HepG2 (cell line): ENCODE measurements at regions of chr14 and their contacts with region 1.

Region 1: GRCh38 chr14:77862154-77862786 is 62.4 kb downstream of the ADCK1 start:
- DNase-seq: peak; percentile 46
- ATAC-seq: peak; percentile 91
- H3K4me3 ChIP-seq: no peak overlapping the region
- H3K27ac ChIP-seq: no peak overlapping the region
- H3K4me1 ChIP-seq: peaks cover 10% of the 10 kb centered on the region
- H3K27me3 ChIP-seq: no peaks in the 10 kb centered on the region
- CTCF ChIP-seq: peak; percentile 95
- EP300 ChIP-seq: no peak
- POLR2A ChIP-seq: no peak
- RAD21 ChIP-seq: peak; percentile 75

Region 2: DNA sequence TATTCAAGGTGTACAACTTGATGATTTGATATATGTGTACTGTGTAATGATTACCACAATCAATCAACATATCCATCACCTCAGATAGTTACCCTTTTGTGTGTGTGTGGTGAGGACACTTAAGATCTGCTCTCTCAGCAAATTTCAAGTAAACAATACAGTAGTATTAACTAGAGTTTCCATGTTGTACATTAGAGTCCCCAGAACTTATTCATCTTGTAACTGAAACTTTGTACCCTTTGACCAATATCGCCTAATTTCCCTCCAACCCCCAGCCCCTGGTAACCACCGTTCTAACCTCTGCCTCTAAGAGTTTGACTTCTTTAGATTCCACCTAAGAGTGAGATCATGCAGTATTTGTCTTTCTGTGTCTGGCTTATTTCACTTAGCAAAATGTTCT is 50.2 kb before region 1 on chr14:
- CTCF ChIA-PET with region 1: no interaction called
- POLR2A ChIA-PET with region 1: no interaction called
- in situ Hi-C with region 1: no loop called
- intact Hi-C with region 1: no loop called
- DNase-seq: no peak
- ATAC-seq: no peak
- H3K4me3 ChIP-seq: no peak overlapping the region
- H3K27ac ChIP-seq: no peak overlapping the region
- H3K4me1 ChIP-seq: peaks cover 3% of the 10 kb centered on the region; the same call in 1 of the 2 replicates
- H3K27me3 ChIP-seq: no peaks in the 10 kb centered on the region
- CTCF ChIP-seq: no peak
- EP300 ChIP-seq: no peak
- POLR2A ChIP-seq: no peak
- RAD21 ChIP-seq: no peak

Region 3: DNA sequence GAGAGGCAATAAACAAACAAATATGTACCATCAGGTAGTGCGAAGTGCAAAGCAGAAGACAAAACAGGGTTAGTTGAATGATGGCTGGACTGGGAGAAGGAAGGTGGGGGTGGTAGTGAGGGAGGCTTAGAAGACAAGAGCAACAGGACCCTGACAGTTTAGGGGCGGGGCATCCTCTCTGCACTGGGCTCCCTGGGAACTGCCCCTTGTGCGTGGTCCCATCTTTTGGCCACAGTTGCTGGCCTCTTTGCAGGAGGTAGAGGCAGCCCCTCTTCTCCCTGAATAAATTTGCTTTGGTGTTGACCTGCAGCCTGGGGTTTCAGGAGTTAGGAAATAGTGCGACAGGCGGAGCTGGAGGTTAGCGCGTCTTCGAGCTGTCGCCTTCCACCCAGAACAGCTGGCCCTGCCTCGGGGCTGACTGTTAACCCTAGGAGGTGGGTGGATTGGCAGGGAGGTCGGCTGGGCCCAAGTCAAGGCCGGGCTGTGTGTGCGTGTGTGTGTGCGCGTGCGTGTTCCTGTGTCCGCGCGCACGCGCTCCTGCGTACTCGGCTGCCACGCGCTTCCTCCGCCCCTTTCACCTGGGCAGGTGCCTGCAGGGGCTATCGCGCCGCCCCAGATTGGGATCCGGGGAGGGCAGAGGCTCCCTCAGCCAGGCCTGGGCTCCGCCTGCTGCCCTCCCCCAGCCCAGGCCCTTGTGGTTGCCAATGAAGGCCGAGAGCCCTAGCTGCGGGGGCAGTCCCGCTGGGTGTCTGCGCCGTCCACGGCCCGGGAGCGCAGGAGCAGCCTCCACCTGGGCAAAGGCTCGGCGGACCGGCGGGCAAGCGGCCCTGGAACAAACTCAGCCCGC is 118.4 kb after region 1 on chr14:
- CTCF ChIA-PET with region 1: no interaction called
- POLR2A ChIA-PET with region 1: no interaction called
- in situ Hi-C with region 1: loop called (anchors 10 kb)
- intact Hi-C with region 1: loop called (anchors 2 kb)
- DNase-seq: no peak
- ATAC-seq: peak; percentile 74
- H3K4me3 ChIP-seq: peak overlapping the region in 2 of 3 experiments; percentile 39 to 52; a peak in 3 of 6 replicates
- H3K27ac ChIP-seq: no peak overlapping the region
- H3K4me1 ChIP-seq: 0 out of 2 replicates have a peak, but pooled peaks cover 8% of the 10 kb centered on the region
- H3K27me3 ChIP-seq: peaks cover 2 to 13% of the 10 kb centered on the region in 2 experiments; a peak in 1 of 5 replicates
- CTCF ChIP-seq: no peak
- EP300 ChIP-seq: no peak
- POLR2A ChIP-seq: no peak
- RAD21 ChIP-seq: no peak

Region 4: GRCh38 chr14:77991128-77991772 is 129.0 kb after region 1 on chr14:
- CTCF ChIA-PET with region 1: interaction called, 4 read pairs
- POLR2A ChIA-PET with region 1: no interaction called
- in situ Hi-C with region 1: loop called (anchors 10 kb)
- intact Hi-C with region 1: loop called (anchors 1 kb)
- DNase-seq: peak; percentile 7
- ATAC-seq: peak; percentile 79
- H3K4me3 ChIP-seq: no peak overlapping the region
- H3K27ac ChIP-seq: no peak overlapping the region
- H3K4me1 ChIP-seq: no peaks in the 10 kb centered on the region
- H3K27me3 ChIP-seq: peaks cover 1 to 4% of the 10 kb centered on the region in 2 experiments; a peak in 2 of 5 replicates
- CTCF ChIP-seq: peak; percentile 47
- EP300 ChIP-seq: no peak
- POLR2A ChIP-seq: no peak
- RAD21 ChIP-seq: no peak

Region 5: GRCh38 chr14:78566026-78566858 is 704.0 kb after region 1 on chr14:
- CTCF ChIA-PET with region 1: interaction called, 3 read pairs
- POLR2A ChIA-PET with region 1: no interaction called
- in situ Hi-C with region 1: no loop called
- intact Hi-C with region 1: loop called (anchors 10 kb)
- DNase-seq: peak; percentile 34
- ATAC-seq: peak; percentile 99
- H3K4me3 ChIP-seq: no peak overlapping the region
- H3K27ac ChIP-seq: no peak overlapping the region
- H3K4me1 ChIP-seq: no peaks in the 10 kb centered on the region
- H3K27me3 ChIP-seq: no peaks in the 10 kb centered on the region
- CTCF ChIP-seq: peak; percentile 83
- EP300 ChIP-seq: no peak
- POLR2A ChIP-seq: no peak
- RAD21 ChIP-seq: peak; percentile 60

Region 6: GRCh38 chr14:78598041-78598920 is 736.0 kb after region 1 on chr14:
- CTCF ChIA-PET with region 1: no interaction called
- POLR2A ChIA-PET with region 1: no interaction called
- in situ Hi-C with region 1: loop called (anchors 25 kb)
- intact Hi-C with region 1: loop called (anchors 10 kb)
- DNase-seq: peak; percentile 44
- ATAC-seq: peak; percentile 99
- H3K4me3 ChIP-seq: no peak overlapping the region
- H3K27ac ChIP-seq: no peak overlapping the region
- H3K4me1 ChIP-seq: no peaks in the 10 kb centered on the region
- H3K27me3 ChIP-seq: no peaks in the 10 kb centered on the region
- CTCF ChIP-seq: peak; percentile 87
- EP300 ChIP-seq: no peak
- POLR2A ChIP-seq: no peak
- RAD21 ChIP-seq: 0 out of 2 replicates have a peak, but pooled peaks have one; percentile 24